Activated CD4-positive, alpha-beta memory T cell treated with anti-CD3 and anti-CD28 coated beads for 36 hours (primary cell): ENCODE measurements at regions of chr18 and their contacts with region 1.

Region 1: GRCh38 chr18:54149078-54149697 is 75.3 kb downstream of the MBD2 start:
- DNase-seq: peak; percentile 87
- H3K4me3 Mint-ChIP-seq: peak overlapping the region; percentile 49
- H3K27ac Mint-ChIP-seq: peak overlapping the region; percentile 97
- H3K4me1 Mint-ChIP-seq: peaks cover 47% of the 10 kb centered on the region
- H3K27me3 Mint-ChIP-seq: no peaks in the 10 kb centered on the region

Region 2: DNA sequence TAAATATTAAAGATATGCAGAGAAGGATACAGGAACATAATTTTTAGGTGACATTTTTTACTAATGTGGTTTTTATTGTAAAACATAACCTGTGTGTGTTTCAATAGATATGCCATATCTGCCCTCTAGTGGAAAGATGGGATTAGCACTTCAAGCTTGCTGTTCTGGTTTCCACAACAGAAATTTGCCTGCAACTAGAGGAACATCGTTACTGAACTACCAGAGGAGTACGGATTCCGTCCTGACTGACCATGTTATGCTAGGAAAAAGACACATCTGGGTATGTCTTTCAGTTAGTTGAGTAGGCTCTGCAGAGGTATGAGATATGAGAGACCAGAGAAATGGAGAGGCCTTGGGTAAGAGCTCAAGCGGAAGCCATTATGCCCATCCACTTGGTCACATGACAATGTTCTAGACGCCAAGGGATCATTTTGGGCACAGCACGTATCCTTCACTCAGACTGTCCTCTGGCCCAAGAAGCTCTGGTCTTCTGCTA is 29.6 kb before region 1 on chr18:
- CTCF ChIA-PET with region 1: interaction called, 13 read pairs
- POLR2A ChIA-PET with region 1: no interaction called
- intact Hi-C with region 1: no loop called
- DNase-seq: no peak
- H3K4me3 Mint-ChIP-seq: peak overlapping the region; percentile 51
- H3K27ac Mint-ChIP-seq: no peak overlapping the region
- H3K4me1 Mint-ChIP-seq: peaks cover 3% of the 10 kb centered on the region
- H3K27me3 Mint-ChIP-seq: no peaks in the 10 kb centered on the region

Region 3: DNA sequence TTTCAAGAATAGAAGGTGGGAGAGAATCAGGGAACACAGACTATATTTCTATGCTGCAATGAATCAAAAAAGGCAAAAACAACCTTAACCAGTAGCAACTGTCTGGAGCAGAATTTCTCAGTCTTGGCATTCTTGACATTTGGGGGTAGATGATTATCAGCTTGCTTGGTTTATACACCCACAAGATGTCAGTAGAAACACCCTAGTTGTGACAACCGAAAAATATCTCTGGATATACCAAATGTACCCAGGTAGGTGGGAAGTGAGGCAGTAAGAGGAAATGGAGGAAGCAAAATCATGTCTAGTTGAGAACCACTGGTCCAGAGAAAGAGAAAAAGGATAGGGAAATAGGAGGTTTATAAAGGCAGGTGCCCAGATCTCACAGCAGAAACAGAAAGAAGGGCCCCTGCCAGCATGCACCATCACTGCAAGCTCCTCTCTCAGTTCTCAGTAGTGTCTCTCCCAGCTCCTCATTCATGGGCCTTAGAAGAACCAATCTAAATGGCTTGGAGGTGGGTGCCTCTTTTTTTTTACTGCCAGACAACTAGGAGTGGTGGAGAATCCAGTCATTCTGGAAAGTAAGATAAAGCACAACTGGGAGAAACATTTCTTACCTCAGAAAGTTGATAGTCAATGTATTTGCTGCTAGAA is 24.9 kb after region 1 on chr18:
- CTCF ChIA-PET with region 1: no interaction called
- POLR2A ChIA-PET with region 1: interaction called, 6 read pairs
- intact Hi-C with region 1: loop called (anchors 1 kb)
- DNase-seq: peak; percentile 26
- H3K4me3 Mint-ChIP-seq: no peak overlapping the region
- H3K27ac Mint-ChIP-seq: peak overlapping the region; percentile 79
- H3K4me1 Mint-ChIP-seq: peaks cover 47% of the 10 kb centered on the region
- H3K27me3 Mint-ChIP-seq: no peaks in the 10 kb centered on the region

Region 4: GRCh38 chr18:54224379-54225014 is 75.3 kb after region 1 on chr18 and contains the start of gene MBD2:
- CTCF ChIA-PET with region 1: interaction called, 3 read pairs
- POLR2A ChIA-PET with region 1: interaction called, 7 read pairs
- intact Hi-C with region 1: loop called (anchors 1 kb)
- DNase-seq: peak; percentile 96
- H3K4me3 Mint-ChIP-seq: peak within 1 kb of the TSS; percentile 88
- H3K27ac Mint-ChIP-seq: peak within 1 kb of the TSS; percentile 96
- H3K4me1 Mint-ChIP-seq: peaks cover 44% of the 10 kb centered on the region
- H3K27me3 Mint-ChIP-seq: no peaks in the 10 kb centered on the region
- total RNA-seq, gene MBD2: 131 to 140 TPM

Region 5: DNA sequence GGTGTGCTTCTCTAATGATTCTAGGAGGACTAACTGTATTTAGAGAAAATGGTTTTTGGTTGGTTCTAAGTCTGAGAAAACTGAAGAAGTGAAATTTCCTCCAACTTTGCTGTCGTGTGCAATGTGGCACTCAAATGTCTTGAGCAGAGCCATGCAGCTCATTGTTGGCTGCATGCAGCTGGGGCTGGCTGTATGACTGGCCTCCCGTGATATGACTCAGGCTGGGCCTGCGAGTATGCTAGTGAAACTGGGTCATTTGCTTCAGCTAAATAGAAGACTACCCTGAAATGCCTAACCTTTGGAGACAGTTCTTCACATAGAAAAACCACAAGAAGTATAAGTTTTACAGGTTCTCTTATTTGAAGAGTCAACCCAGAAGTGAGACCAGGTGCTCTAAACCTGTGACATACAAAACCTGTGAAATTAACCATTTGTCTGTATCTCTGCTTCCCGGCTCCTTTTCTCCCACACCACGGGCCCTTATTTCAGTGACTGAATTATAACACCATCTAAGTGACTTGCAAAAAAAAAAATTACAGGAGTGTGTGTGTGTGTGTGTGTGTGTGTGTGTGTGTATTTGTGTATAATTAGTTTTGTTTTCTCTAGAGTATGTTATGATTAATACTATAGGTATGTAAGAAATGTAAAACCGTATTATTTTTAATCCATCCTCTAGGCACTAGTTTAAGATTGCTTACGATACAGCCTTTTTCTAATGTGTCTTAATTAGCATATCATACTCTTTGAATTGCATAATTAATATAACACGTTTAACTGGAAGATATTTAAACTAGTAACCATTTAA is 136.0 kb after region 1 on chr18:
- CTCF ChIA-PET with region 1: interaction called, 3 read pairs
- POLR2A ChIA-PET with region 1: interaction called, 6 read pairs
- intact Hi-C with region 1: loop called (anchors 1 kb)
- DNase-seq: peak; percentile 92
- H3K4me3 Mint-ChIP-seq: no peak overlapping the region
- H3K27ac Mint-ChIP-seq: peak overlapping the region; percentile 65
- H3K4me1 Mint-ChIP-seq: peaks cover 23% of the 10 kb centered on the region
- H3K27me3 Mint-ChIP-seq: no peaks in the 10 kb centered on the region